Natural killer cell (primary cell): ENCODE measurements at regions of chr10 and their contacts with region 1.

Region 1: GRCh38 chr10:7260412-7260900 is 150.4 kb downstream of the SFMBT2 start:
- DNase-seq: peak in 1 of 2 donors; percentile 72
- ATAC-seq: peak; percentile 54 to 73 (median 70)
- H3K4me3 ChIP-seq: no peak overlapping the region
- H3K4me3 Mint-ChIP-seq: peak overlapping the region; percentile 79
- H3K27ac ChIP-seq: no peak overlapping the region
- H3K27ac Mint-ChIP-seq: peak overlapping the region; percentile 86 to 91
- H3K4me1 ChIP-seq: peaks cover 44% of the 10 kb centered on the region
- H3K4me1 Mint-ChIP-seq: peaks cover 55 to 58% of the 10 kb centered on the region in 2 donors
- H3K27me3 ChIP-seq: no peaks in the 10 kb centered on the region
- H3K27me3 Mint-ChIP-seq: no peaks in the 10 kb centered on the region
- CTCF ChIP-seq: peak; percentile 54

Region 2: DNA sequence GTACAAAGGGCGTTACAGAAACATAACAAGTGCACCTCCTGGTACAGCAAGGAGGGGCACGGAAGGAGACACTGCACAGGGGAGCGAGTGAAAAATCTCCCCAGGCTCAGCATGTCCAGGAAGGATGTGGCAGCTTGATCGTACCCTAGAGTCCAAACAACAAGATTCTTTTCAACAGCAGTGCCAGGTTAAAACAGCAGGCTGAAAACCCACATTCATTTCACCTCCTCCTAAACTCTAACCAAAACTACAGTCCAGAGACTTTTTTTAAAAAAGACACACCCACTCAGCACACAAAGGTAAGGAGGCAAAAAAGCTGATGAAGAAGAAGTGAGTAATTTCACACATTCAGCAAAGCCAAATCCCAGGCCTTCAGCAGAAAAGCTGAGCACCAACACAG is 11.6 kb after region 1 on chr10:
- intact Hi-C with region 1: loop called (anchors 1 kb)
- DNase-seq: peak in 1 of 2 donors; percentile 60
- ATAC-seq: peak in 2 of 3 donors; percentile 17 to 47
- H3K4me3 ChIP-seq: no peak overlapping the region
- H3K4me3 Mint-ChIP-seq: peak overlapping the region; percentile 79
- H3K27ac ChIP-seq: peak overlapping the region; percentile 8
- H3K27ac Mint-ChIP-seq: peak overlapping the region; percentile 83 to 89
- H3K4me1 ChIP-seq: peaks cover 37% of the 10 kb centered on the region
- H3K4me1 Mint-ChIP-seq: peaks cover 60 to 79% of the 10 kb centered on the region in 2 donors
- H3K27me3 ChIP-seq: no peaks in the 10 kb centered on the region
- H3K27me3 Mint-ChIP-seq: no peaks in the 10 kb centered on the region
- CTCF ChIP-seq: no peak

Region 3: DNA sequence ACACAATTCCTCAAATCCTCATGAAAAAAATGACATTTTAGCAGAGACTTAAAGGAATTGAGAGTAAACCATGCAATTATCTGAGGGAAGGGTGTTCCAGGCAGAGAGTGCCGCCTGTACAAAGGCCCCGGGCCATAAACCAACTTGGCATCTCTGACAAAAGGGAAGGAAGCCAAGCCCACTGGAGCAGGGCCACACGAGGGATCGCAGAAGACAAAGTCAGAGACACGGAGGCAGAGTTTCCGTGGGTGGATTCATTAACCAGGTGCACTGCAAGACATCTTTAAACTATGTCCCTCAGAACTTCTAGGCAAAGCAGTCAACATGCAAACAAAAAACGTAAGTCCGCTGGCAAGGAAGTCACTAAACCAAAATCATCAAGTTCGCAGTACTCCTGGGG is 58.4 kb after region 1 on chr10:
- intact Hi-C with region 1: loop called (anchors 5 kb)
- DNase-seq: no peak
- ATAC-seq: no peak
- H3K4me3 ChIP-seq: no peak overlapping the region
- H3K4me3 Mint-ChIP-seq: peak overlapping the region; percentile 73
- H3K27ac ChIP-seq: no peak overlapping the region
- H3K27ac Mint-ChIP-seq: peak overlapping the region; percentile 28 to 44
- H3K4me1 ChIP-seq: peaks cover 31% of the 10 kb centered on the region
- H3K4me1 Mint-ChIP-seq: peaks cover 55 to 62% of the 10 kb centered on the region in 2 donors
- H3K27me3 ChIP-seq: no peaks in the 10 kb centered on the region
- H3K27me3 Mint-ChIP-seq: no peaks in the 10 kb centered on the region
- CTCF ChIP-seq: no peak

Region 4: GRCh38 chr10:7484456-7485243 is 224.2 kb after region 1 on chr10:
- intact Hi-C with region 1: loop called (anchors 5 kb)
- DNase-seq: peak; percentile 54 to 87
- ATAC-seq: peak; percentile 77 to 95 (median 86)
- H3K4me3 ChIP-seq: peak overlapping the region; percentile 7
- H3K4me3 Mint-ChIP-seq: peak overlapping the region; percentile 85
- H3K27ac ChIP-seq: peak overlapping the region; percentile 77
- H3K27ac Mint-ChIP-seq: peak overlapping the region; percentile 97 to 99
- H3K4me1 ChIP-seq: peaks cover 63% of the 10 kb centered on the region
- H3K4me1 Mint-ChIP-seq: peaks cover 68 to 81% of the 10 kb centered on the region in 2 donors
- H3K27me3 ChIP-seq: no peaks in the 10 kb centered on the region
- H3K27me3 Mint-ChIP-seq: no peaks in the 10 kb centered on the region
- CTCF ChIP-seq: no peak